Right ventricle myocardium superior (tissue), 1 donor: ENCODE measurements at regions of chr17 and their contacts with region 1.

Region 1: GRCh38 chr17:28726226-28727130 is at the start of gene TLCD1:
- DNase-seq: peak; percentile 95
- ATAC-seq: peak; percentile 76
- total RNA-seq, gene TLCD1: 1.9 TPM

Region 2: GRCh38 chr17:28951991-28952975 is 225.8 kb after region 1 on chr17:
- intact Hi-C with region 1: loop called (anchors 5 kb)
- DNase-seq: peak; percentile 97
- ATAC-seq: peak; percentile 81

Region 3: GRCh38 chr17:29111816-29112499 is 385.5 kb after region 1 on chr17:
- intact Hi-C with region 1: loop called (anchors 10 kb)
- DNase-seq: peak; percentile 85
- ATAC-seq: peak; percentile 64